ENCODE measurements at regions of chr5 and their contacts with region 1.

Region 1: GRCh38 chr5:172714491-172715421 is 56.2 kb downstream of the DUSP1 start:
- DNase-seq: peak; percentile 89 to 95 (median 91)
- ATAC-seq: peak; percentile 80 to 89 (median 82)
- H3K4me3 ChIP-seq: no peak overlapping the region
- H3K27ac ChIP-seq: peak overlapping the region; percentile 70 to 83 (median 77)
- H3K4me1 ChIP-seq: peaks cover 0 to 30% (median 10%) of the 10 kb centered on the region in 4 donors
- H3K27me3 ChIP-seq: no peaks in the 10 kb centered on the region
- CTCF ChIP-seq: peak; percentile 72 to 98 (median 72)
- POLR2A ChIP-seq: peak; percentile 76

Region 2: DNA sequence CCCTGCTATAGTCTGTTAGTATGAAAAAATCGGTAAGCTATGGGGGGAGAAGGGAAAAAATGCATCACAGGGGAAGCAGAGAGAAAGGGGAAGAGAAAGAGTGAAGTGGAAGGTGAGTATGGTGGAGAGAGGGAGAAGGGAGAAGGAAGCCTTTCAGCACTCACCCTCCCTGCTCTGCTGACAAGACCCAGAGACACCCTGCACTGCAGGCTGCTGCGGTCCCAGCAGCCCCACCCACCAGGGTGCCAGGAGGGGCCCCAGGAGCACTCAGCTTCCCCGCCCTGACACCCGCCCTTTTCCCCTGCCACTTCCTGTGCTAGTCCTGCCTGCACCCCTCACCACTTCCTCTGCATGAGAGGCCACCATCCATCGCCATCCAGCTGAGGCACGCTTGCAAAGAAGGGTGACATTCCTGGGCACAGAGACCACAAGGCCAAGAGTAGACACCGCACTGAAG is 539.5 kb before region 1 on chr5:
- intact Hi-C with region 1: no loop called
- DNase-seq: peak; percentile 67 to 81 (median 73)
- ATAC-seq: peak; percentile 50 to 67 (median 62)
- H3K4me3 ChIP-seq: no peak overlapping the region
- H3K27ac ChIP-seq: peak overlapping the region in 2 of 3 donors; percentile 36 to 43
- H3K4me1 ChIP-seq: no peaks in the 10 kb centered on the region
- H3K27me3 ChIP-seq: no peaks in the 10 kb centered on the region
- CTCF ChIP-seq: no peak
- POLR2A ChIP-seq: peak; percentile 19

Region 3: GRCh38 chr5:172764849-172765765 is 50.4 kb after region 1 on chr5:
- intact Hi-C with region 1: loop called (anchors 5 kb)
- DNase-seq: peak; percentile 92 to 97 (median 95)
- ATAC-seq: peak; percentile 48 to 76 (median 56)
- H3K4me3 ChIP-seq: peak overlapping the region; percentile 22 to 43 (median 22)
- H3K27ac ChIP-seq: peak overlapping the region; percentile 99 to 100 (median 99)
- H3K4me1 ChIP-seq: peaks cover 0 to 43% (median 4%) of the 10 kb centered on the region in 4 donors
- H3K27me3 ChIP-seq: no peaks in the 10 kb centered on the region
- CTCF ChIP-seq: no peak
- POLR2A ChIP-seq: peak; percentile 48

Region 4: GRCh38 chr5:172932313-172933017 is 217.7 kb after region 1 on chr5:
- intact Hi-C with region 1: loop called (anchors 5 kb)
- DNase-seq: peak; percentile 79 to 81 (median 79)
- ATAC-seq: peak; percentile 91 to 99 (median 96)
- H3K4me3 ChIP-seq: no peak overlapping the region
- H3K27ac ChIP-seq: peak overlapping the region in 1 of 3 donors; percentile 6
- H3K4me1 ChIP-seq: peaks cover 0 to 7% (median 0%) of the 10 kb centered on the region in 4 donors
- H3K27me3 ChIP-seq: no peaks in the 10 kb centered on the region
- CTCF ChIP-seq: peak; percentile 90 to 96 (median 96)
- POLR2A ChIP-seq: no peak

Region 5: DNA sequence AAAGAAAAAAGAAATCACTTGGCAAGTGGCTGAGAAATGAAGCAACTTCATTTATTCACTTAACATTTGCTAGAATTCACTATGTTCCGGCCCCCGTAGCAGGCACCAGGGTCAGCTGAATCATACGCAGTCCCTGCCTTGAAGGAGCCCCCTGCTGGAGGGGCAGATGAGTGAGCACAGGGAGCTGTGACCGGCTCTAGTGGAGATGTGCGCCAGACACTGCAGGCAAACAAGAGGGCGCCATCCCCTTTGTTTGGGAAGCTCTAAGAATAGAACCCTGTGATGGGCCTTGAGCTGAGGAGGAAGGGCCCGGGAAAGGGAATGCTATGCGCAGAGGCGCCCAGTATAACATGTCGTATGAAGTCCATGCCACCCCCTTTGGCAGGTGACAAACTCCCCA is 224.3 kb after region 1 on chr5:
- intact Hi-C with region 1: loop called (anchors 5 kb)
- DNase-seq: peak in 1 of 3 donors; percentile 34
- ATAC-seq: peak; percentile 39 to 48 (median 44)
- H3K4me3 ChIP-seq: no peak overlapping the region
- H3K27ac ChIP-seq: no peak overlapping the region
- H3K4me1 ChIP-seq: no peaks in the 10 kb centered on the region
- H3K27me3 ChIP-seq: no peaks in the 10 kb centered on the region
- CTCF ChIP-seq: peak in 3 of 4 donors; percentile 19 to 38 (median 28)
- POLR2A ChIP-seq: no peak

Measured in right lobe of liver (tissue), 6 donors.